Body of pancreas (tissue), 4 donors: ENCODE measurements at regions of chr10 and their contacts with region 1.

Region 1: GRCh38 chr10:71191531-71192076 is 20.8 kb upstream of the UNC5B start:
- DNase-seq: no peak
- ATAC-seq: no peak
- H3K4me3 ChIP-seq: no peak overlapping the region
- H3K27ac ChIP-seq: no peak overlapping the region
- H3K4me1 ChIP-seq: peaks cover 12% of the 10 kb centered on the region
- H3K27me3 ChIP-seq: no peaks in the 10 kb centered on the region
- CTCF ChIP-seq: no peak
- POLR2A ChIP-seq: no peak

Region 2: GRCh38 chr10:70931168-70931815 is 260.3 kb before region 1 on chr10:
- intact Hi-C with region 1: loop called (anchors 10 kb)
- DNase-seq: no peak
- ATAC-seq: no peak
- H3K4me3 ChIP-seq: no peak overlapping the region
- H3K27ac ChIP-seq: no peak overlapping the region
- H3K4me1 ChIP-seq: no peaks in the 10 kb centered on the region
- H3K27me3 ChIP-seq: no peaks in the 10 kb centered on the region
- CTCF ChIP-seq: no peak
- POLR2A ChIP-seq: no peak

Region 3: GRCh38 chr10:71255808-71256660 is 64.4 kb after region 1 on chr10:
- intact Hi-C with region 1: no loop called
- DNase-seq: peak in 1 of 4 donors; percentile 50
- ATAC-seq: no peak
- H3K4me3 ChIP-seq: no peak overlapping the region
- H3K27ac ChIP-seq: no peak overlapping the region
- H3K4me1 ChIP-seq: no peaks in the 10 kb centered on the region
- H3K27me3 ChIP-seq: no peaks in the 10 kb centered on the region
- CTCF ChIP-seq: no peak
- POLR2A ChIP-seq: no peak

Region 4: DNA sequence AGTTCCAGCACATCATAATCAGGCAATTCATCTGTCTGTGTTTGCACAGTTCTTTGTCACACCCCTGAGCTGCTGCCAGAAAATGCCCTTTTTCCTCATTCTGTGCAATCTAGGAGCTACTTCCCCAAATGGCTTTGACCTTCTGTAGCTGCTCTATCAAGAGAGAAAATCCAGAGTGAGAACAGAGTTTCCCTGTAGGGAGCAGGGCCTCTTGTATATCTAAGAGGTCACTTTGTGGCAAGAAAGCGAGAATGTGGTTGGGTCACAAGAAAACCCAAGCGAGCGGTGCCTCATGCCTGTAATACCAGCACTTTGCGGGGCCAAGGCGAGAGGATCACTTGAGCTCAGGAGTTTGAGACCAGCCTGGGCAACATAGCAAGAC is 151.8 kb after region 1 on chr10:
- intact Hi-C with region 1: no loop called
- DNase-seq: peak in 1 of 4 donors; percentile 54
- ATAC-seq: no peak
- H3K4me3 ChIP-seq: no peak overlapping the region
- H3K27ac ChIP-seq: no peak overlapping the region
- H3K4me1 ChIP-seq: no peaks in the 10 kb centered on the region
- H3K27me3 ChIP-seq: no peaks in the 10 kb centered on the region
- CTCF ChIP-seq: no peak
- POLR2A ChIP-seq: no peak